ENCODE measurements at regions of chr11 and their contacts with region 1.

Region 1: GRCh38 chr11:79400717-79401686 is 39.8 kb downstream of the TENM4 start:
- DNase-seq: peak in 1 of 2 experiments; percentile 75
- H3K4me3 ChIP-seq: no peak overlapping the region
- H3K27ac ChIP-seq: no peak overlapping the region
- H3K4me1 ChIP-seq: peaks cover 0 to 2% (median 0%) of the 10 kb centered on the region in 4 experiments; a peak in 1 of 7 replicates
- H3K27me3 ChIP-seq: no peaks in the 10 kb centered on the region
- CTCF ChIP-seq: peak; percentile 92 to 93 (median 92)
- EP300 ChIP-seq: no peak
- POLR2A ChIP-seq: no peak
- RAD21 ChIP-seq: peak; percentile 84 to 89

Region 2: GRCh38 chr11:79212741-79213190 is 188.2 kb before region 1 on chr11:
- CTCF ChIA-PET with region 1: no interaction called
- POLR2A ChIA-PET with region 1: no interaction called
- DNase-seq: no peak
- H3K4me3 ChIP-seq: no peak overlapping the region
- H3K27ac ChIP-seq: no peak overlapping the region
- H3K4me1 ChIP-seq: peaks cover 0 to 2% (median 0%) of the 10 kb centered on the region in 4 experiments; a peak in 1 of 7 replicates
- H3K27me3 ChIP-seq: no peaks in the 10 kb centered on the region
- CTCF ChIP-seq: no peak
- EP300 ChIP-seq: no peak
- POLR2A ChIP-seq: no peak
- RAD21 ChIP-seq: no peak

Region 3: DNA sequence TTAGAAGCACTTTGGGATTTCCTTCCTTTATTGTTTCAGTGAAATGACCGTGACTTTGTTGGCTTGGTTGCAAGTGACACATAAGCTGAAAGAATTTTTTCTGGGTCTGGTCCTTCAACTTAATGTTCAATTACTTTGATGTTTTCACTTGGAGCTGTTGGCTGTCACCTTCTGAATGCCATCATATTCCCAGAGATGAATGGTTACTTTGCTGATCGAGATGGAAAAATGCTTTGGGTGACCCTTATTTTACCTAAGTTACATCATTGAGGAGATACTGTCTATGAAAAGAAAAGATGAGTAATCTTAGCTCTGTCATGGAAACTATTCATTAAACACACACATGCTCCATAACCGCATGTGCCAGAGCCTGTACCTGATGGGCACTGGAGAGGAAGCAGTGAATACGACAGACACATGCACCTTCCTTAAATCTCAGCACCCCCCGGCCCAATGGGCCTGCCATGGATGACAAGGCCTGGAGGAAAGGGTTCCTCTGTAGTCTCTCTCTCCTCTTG is 37.1 kb before region 1 on chr11:
- CTCF ChIA-PET with region 1: interaction called, 19 read pairs
- POLR2A ChIA-PET with region 1: no interaction called
- DNase-seq: no peak
- H3K4me3 ChIP-seq: no peak overlapping the region
- H3K27ac ChIP-seq: no peak overlapping the region
- H3K4me1 ChIP-seq: no peaks in the 10 kb centered on the region; a peak in 1 of 7 replicates
- H3K27me3 ChIP-seq: no peaks in the 10 kb centered on the region
- CTCF ChIP-seq: no peak
- EP300 ChIP-seq: no peak
- POLR2A ChIP-seq: no peak
- RAD21 ChIP-seq: no peak

Region 4: GRCh38 chr11:79413268-79413667 is 12.3 kb after region 1 on chr11:
- CTCF ChIA-PET with region 1: interaction called, 46 read pairs
- POLR2A ChIA-PET with region 1: no interaction called
- DNase-seq: no peak
- H3K4me3 ChIP-seq: no peak overlapping the region
- H3K27ac ChIP-seq: no peak overlapping the region
- H3K4me1 ChIP-seq: 0 out of 7 replicates have a peak, but pooled peaks cover 0 to 5% (median 0%) of the 10 kb centered on the region in 4 experiments
- H3K27me3 ChIP-seq: no peaks in the 10 kb centered on the region
- CTCF ChIP-seq: peak in 1 of 3 experiments; percentile 2; a peak in 1 of 4 replicates
- EP300 ChIP-seq: no peak
- POLR2A ChIP-seq: no peak
- RAD21 ChIP-seq: peak in 1 of 2 experiments; percentile 19; a peak in 1 of 4 replicates

Region 5: DNA sequence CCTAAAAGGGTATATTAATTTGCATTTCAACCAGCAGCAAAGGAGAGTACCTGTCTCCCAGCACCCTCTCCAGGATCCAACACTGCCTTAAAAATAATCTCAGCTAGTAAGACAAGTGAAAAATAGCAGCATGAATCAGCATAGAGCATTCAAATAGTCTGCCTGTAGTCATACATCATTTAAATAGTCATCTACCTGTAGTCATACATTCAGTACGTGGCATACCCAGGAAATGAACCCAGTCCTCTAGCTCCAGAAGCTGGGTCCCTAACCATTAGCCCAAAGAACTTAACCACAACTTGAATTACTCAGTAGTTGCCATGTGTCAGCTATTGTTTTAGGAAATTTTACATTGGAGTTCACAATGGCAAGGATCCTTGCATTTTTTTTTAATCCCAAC is 30.5 kb after region 1 on chr11:
- CTCF ChIA-PET with region 1: interaction called, 56 read pairs
- POLR2A ChIA-PET with region 1: no interaction called
- DNase-seq: no peak
- H3K4me3 ChIP-seq: no peak overlapping the region
- H3K27ac ChIP-seq: no peak overlapping the region
- H3K4me1 ChIP-seq: peaks cover 0 to 16% (median 10%) of the 10 kb centered on the region in 4 experiments; a peak in 5 of 7 replicates
- H3K27me3 ChIP-seq: peaks cover 8 to 21% (median 14%) of the 10 kb centered on the region in 4 experiments
- CTCF ChIP-seq: no peak
- EP300 ChIP-seq: no peak
- POLR2A ChIP-seq: no peak
- RAD21 ChIP-seq: no peak

Region 6: DNA sequence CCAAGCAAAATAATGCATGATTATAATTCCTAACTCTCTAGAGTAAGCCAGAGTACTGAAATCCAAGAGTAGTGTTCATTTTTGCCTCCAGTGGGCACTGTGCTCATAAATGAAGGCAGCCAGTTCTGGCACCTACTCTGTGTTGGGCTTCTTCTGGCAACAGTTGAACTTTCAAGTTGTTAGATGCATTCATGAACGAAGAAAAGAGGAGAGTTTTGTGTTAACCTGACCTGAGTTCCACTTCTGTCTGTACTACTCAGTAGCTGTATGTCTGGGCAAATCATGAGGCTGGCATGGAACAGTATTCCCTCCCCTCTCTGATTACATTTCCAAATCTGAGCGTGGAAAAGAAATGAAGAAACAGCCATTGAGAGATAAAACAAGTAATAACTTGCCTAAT is 60.1 kb after region 1 on chr11:
- CTCF ChIA-PET with region 1: interaction called, 13 read pairs
- POLR2A ChIA-PET with region 1: no interaction called
- DNase-seq: no peak
- H3K4me3 ChIP-seq: no peak overlapping the region
- H3K27ac ChIP-seq: no peak overlapping the region
- H3K4me1 ChIP-seq: no peaks in the 10 kb centered on the region
- H3K27me3 ChIP-seq: no peaks in the 10 kb centered on the region
- CTCF ChIP-seq: peak in 2 of 3 experiments; percentile 71 to 76; a peak in 3 of 4 replicates
- EP300 ChIP-seq: no peak
- POLR2A ChIP-seq: no peak
- RAD21 ChIP-seq: peak; percentile 70 to 87

Region 7: GRCh38 chr11:79493555-79494171 is 92.7 kb after region 1 on chr11:
- CTCF ChIA-PET with region 1: interaction called, 55 read pairs
- POLR2A ChIA-PET with region 1: no interaction called
- DNase-seq: peak; percentile 92 to 98
- H3K4me3 ChIP-seq: no peak overlapping the region
- H3K27ac ChIP-seq: no peak overlapping the region
- H3K4me1 ChIP-seq: peaks cover 0 to 2% (median 0%) of the 10 kb centered on the region in 4 experiments; a peak in 1 of 7 replicates
- H3K27me3 ChIP-seq: no peaks in the 10 kb centered on the region
- CTCF ChIP-seq: peak; percentile 88 to 98 (median 96)
- EP300 ChIP-seq: peak in 1 of 2 experiments; percentile 28; a peak in 1 of 3 replicates
- POLR2A ChIP-seq: no peak
- RAD21 ChIP-seq: peak; percentile 91 to 97